CD14-positive monocyte (primary cell): ENCODE measurements at regions of chr18 and their contacts with region 1.

Region 1: GRCh38 chr18:48230467-48231113 is 178.6 kb downstream of the ZBTB7C start:
- DNase-seq: peak in 2 of 3 donors; percentile 53 to 86
- H3K4me3 ChIP-seq: no peak overlapping the region
- H3K4me3 Mint-ChIP-seq: no peak overlapping the region
- H3K27ac ChIP-seq: no peak overlapping the region
- H3K27ac Mint-ChIP-seq: peak overlapping the region in 2 of 7 donors; percentile 32 to 64
- H3K4me1 ChIP-seq: peaks cover 13 to 41% of the 10 kb centered on the region in 2 donors
- H3K4me1 Mint-ChIP-seq: peaks cover 32% of the 10 kb centered on the region
- H3K27me3 ChIP-seq: peaks cover 0 to 4% of the 10 kb centered on the region in 2 donors
- H3K27me3 Mint-ChIP-seq: peaks cover 6 to 7% (median 7%) of the 10 kb centered on the region in 3 donors
- CTCF ChIP-seq: peak; percentile 49

Region 2: DNA sequence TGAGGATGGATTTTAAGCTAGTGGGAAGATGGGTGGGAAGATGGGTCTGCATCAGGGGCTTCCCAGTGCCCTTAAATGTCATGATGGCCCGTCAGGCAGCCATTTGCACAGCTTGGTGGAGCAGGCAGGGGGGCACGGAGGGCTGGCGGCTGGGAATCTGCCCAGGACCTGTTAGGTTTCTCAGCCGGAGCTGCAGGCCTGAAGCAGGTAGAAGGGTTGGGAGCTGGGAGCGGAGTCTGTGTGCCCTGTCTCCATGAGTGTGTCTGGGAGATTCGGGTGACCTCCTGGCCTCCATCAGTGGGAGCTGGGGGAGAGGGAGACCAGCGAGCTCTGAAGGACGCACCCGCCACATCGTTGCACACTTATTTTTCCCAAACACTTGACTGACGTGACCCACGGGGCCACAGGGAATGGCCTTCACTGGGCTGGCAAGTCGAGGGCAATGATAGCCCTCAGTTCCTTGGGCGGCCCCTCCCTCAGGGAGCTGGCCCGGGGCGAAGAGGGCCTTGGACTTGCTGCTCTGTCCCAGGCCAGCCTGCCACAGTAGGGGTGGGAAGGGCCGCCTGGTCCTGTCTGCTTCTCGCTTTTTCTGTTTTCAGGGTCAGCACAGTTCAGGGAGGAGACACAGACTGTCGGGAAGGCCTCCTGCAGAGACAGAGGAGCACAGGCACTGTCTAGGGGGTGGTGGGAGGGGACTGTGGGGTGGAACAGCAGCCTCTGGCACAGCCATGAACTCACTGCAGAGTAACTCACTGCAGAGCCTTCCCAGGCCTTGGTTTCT is 58.2 kb before region 1 on chr18:
- intact Hi-C with region 1: no loop called
- DNase-seq: no peak
- H3K4me3 ChIP-seq: no peak overlapping the region
- H3K4me3 Mint-ChIP-seq: no peak overlapping the region
- H3K27ac ChIP-seq: no peak overlapping the region
- H3K27ac Mint-ChIP-seq: no peak overlapping the region
- H3K4me1 ChIP-seq: peaks cover 2 to 6% of the 10 kb centered on the region in 2 donors
- H3K4me1 Mint-ChIP-seq: no peaks in the 10 kb centered on the region
- H3K27me3 ChIP-seq: no peaks in the 10 kb centered on the region
- H3K27me3 Mint-ChIP-seq: peaks cover under 1 to 7% (median 4%) of the 10 kb centered on the region in 3 donors
- CTCF ChIP-seq: no peak

Region 3: GRCh38 chr18:48445540-48445939 is 214.9 kb after region 1 on chr18:
- intact Hi-C with region 1: loop called in 1 of 2 experiments (anchors 10 kb)
- DNase-seq: peak; percentile 62 to 80 (median 75)
- H3K4me3 ChIP-seq: no peak overlapping the region
- H3K4me3 Mint-ChIP-seq: no peak overlapping the region
- H3K27ac ChIP-seq: no peak overlapping the region
- H3K27ac Mint-ChIP-seq: no peak overlapping the region
- H3K4me1 ChIP-seq: peaks cover 4% of the 10 kb centered on the region in 2 donors
- H3K4me1 Mint-ChIP-seq: peaks cover 20% of the 10 kb centered on the region
- H3K27me3 ChIP-seq: peaks cover 11 to 22% of the 10 kb centered on the region in 2 donors
- H3K27me3 Mint-ChIP-seq: peaks cover 19 to 60% (median 25%) of the 10 kb centered on the region in 3 donors
- CTCF ChIP-seq: peak; percentile 94